Naive thymus-derived CD4-positive, alpha-beta T cell (primary cell): ENCODE measurements at regions of chr20 and their contacts with region 1.

Region 1: GRCh38 chr20:833450-834150 is at the start of gene FAM110A:
- DNase-seq: peak; percentile 87 to 95 (median 94)
- ATAC-seq: peak; percentile 94
- H3K4me3 ChIP-seq: peak within 1 kb of the TSS; percentile 88
- H3K4me3 Mint-ChIP-seq: peak within 1 kb of the TSS; percentile 73 to 92 (median 87)
- H3K27ac ChIP-seq: peak within 1 kb of the TSS; percentile 94
- H3K27ac Mint-ChIP-seq: peak within 1 kb of the TSS; percentile 60 to 97 (median 87)
- H3K4me1 ChIP-seq: peaks cover 24 to 27% of the 10 kb centered on the region in 2 donors
- H3K4me1 Mint-ChIP-seq: peaks cover 36 to 50% (median 46%) of the 10 kb centered on the region in 7 donors
- H3K27me3 ChIP-seq: no peaks in the 10 kb centered on the region
- H3K27me3 Mint-ChIP-seq: no peaks in the 10 kb centered on the region
- total RNA-seq, gene FAM110A: 10.9 to 47.4 (median 23.7) TPM

Region 2: DNA sequence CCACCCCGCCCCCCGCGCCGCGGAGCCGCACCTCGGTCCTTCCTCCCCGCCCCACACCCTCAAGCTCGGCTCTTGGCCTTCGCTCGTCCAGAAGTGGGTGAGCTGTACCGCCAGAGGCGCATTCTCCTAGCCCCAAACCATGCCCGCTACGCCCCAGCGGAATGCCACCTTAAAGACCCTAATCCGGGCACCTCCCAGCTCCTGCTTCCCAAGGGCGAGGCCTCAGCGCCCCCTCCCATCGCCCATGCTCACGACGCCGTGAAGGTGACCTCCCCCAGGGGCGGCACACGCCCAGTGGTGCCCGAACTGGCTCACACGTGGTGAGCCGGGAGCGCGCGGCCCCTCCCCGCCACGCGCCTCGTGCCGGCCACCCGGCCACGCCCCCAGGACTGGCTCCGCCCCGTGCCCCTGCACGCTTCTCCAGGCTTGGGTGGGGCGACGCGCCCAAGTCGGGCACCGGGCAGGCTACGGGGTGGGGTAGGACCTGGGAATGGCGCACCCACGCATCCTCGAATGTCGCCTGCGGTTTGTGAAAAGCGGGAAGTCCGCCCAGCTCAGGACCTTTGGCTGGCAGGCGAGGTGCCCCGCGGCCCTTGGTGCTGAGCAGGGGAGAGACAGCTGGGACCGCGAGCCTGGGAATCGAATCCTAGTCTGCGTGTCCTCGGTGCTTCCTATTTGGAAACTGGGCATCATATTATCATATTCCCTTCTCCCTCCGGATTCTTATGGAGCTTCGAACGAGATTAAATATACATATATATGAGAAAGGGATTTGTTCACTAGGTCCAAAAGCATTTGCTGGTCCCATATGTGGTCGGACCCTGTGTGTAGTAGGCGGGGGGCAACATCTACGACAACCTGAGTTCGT is 509.2 kb before region 1 on chr20:
- CTCF ChIA-PET with region 1: no interaction called
- POLR2A ChIA-PET with region 1: no interaction called
- intact Hi-C with region 1: loop called in 1 of 2 experiments (anchors 2 kb)
- DNase-seq: peak; percentile 74 to 96 (median 84)
- ATAC-seq: peak; percentile 75
- H3K4me3 ChIP-seq: peak overlapping the region; percentile 80
- H3K4me3 Mint-ChIP-seq: peak overlapping the region; percentile 88 to 97 (median 94)
- H3K27ac ChIP-seq: peak overlapping the region; percentile 77
- H3K27ac Mint-ChIP-seq: peak overlapping the region; percentile 84 to 96 (median 94)
- H3K4me1 ChIP-seq: peaks cover 7 to 9% of the 10 kb centered on the region in 2 donors
- H3K4me1 Mint-ChIP-seq: peaks cover 7 to 20% (median 17%) of the 10 kb centered on the region in 7 donors
- H3K27me3 ChIP-seq: no peaks in the 10 kb centered on the region
- H3K27me3 Mint-ChIP-seq: peaks cover 0 to 8% (median 0%) of the 10 kb centered on the region in 5 donors

Region 3: GRCh38 chr20:543369-544152 is 290.0 kb before region 1 on chr20 and contains the start of gene CSNK2A1:
- CTCF ChIA-PET with region 1: no interaction called
- POLR2A ChIA-PET with region 1: no interaction called
- intact Hi-C with region 1: loop called in 1 of 2 experiments (anchors 5 kb)
- DNase-seq: peak; percentile 93 to 99 (median 97)
- ATAC-seq: peak; percentile 97
- H3K4me3 ChIP-seq: peak within 1 kb of the TSS; percentile 59
- H3K4me3 Mint-ChIP-seq: peak within 1 kb of the TSS; percentile 86 to 100 (median 91)
- H3K27ac ChIP-seq: peak within 1 kb of the TSS; percentile 94
- H3K27ac Mint-ChIP-seq: peak within 1 kb of the TSS; percentile 97 to 100 (median 98)
- H3K4me1 ChIP-seq: peaks cover 17 to 39% of the 10 kb centered on the region in 2 donors
- H3K4me1 Mint-ChIP-seq: peaks cover 40 to 58% (median 54%) of the 10 kb centered on the region in 7 donors
- H3K27me3 ChIP-seq: no peaks in the 10 kb centered on the region
- H3K27me3 Mint-ChIP-seq: peaks cover 0 to 9% (median 5%) of the 10 kb centered on the region in 5 donors
- total RNA-seq, gene CSNK2A1: 69.7 to 117 (median 90.8) TPM

Region 4: DNA sequence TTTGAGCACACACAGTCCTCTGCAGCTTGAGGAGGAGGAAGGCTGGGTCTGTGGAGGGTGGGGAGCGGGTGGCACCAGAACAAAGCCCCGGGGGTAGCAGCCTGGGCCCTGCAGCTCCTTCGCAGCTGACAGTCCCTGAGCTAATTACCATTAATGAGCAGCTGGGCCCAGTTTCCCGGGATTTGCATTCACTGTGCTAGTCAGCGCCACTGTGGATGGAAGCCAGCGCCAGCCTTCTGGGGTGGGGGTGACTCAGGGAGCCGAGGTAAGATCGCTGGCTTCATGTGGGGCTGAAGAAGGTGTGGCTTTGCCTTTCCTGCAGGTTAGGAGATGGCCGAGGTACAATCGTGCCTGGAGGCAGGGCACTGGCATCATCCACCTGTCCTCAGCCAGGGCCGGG is 199.0 kb before region 1 on chr20:
- CTCF ChIA-PET with region 1: no interaction called
- POLR2A ChIA-PET with region 1: no interaction called
- intact Hi-C with region 1: no loop called
- DNase-seq: no peak
- ATAC-seq: no peak
- H3K4me3 ChIP-seq: no peak overlapping the region
- H3K4me3 Mint-ChIP-seq: no peak overlapping the region
- H3K27ac ChIP-seq: no peak overlapping the region
- H3K27ac Mint-ChIP-seq: no peak overlapping the region
- H3K4me1 ChIP-seq: no peaks in the 10 kb centered on the region
- H3K4me1 Mint-ChIP-seq: no peaks in the 10 kb centered on the region
- H3K27me3 ChIP-seq: no peaks in the 10 kb centered on the region
- H3K27me3 Mint-ChIP-seq: peaks cover 5 to 29% (median 16%) of the 10 kb centered on the region in 5 donors

Region 5: GRCh38 chr20:768426-768978 is 65.1 kb before region 1 on chr20 and contains the start of gene SLC52A3:
- CTCF ChIA-PET with region 1: no interaction called
- POLR2A ChIA-PET with region 1: no interaction called
- intact Hi-C with region 1: no loop called
- DNase-seq: no peak
- ATAC-seq: no peak
- H3K4me3 ChIP-seq: no peak within 1 kb of the TSS
- H3K4me3 Mint-ChIP-seq: no peak within 1 kb of the TSS
- H3K27ac ChIP-seq: no peak within 1 kb of the TSS
- H3K27ac Mint-ChIP-seq: no peak within 1 kb of the TSS
- H3K4me1 ChIP-seq: no peaks in the 10 kb centered on the region
- H3K4me1 Mint-ChIP-seq: peaks cover 0 to 3% (median 0%) of the 10 kb centered on the region in 7 donors
- H3K27me3 ChIP-seq: no peaks in the 10 kb centered on the region
- H3K27me3 Mint-ChIP-seq: peaks cover 3 to 22% (median 10%) of the 10 kb centered on the region in 5 donors
- total RNA-seq, gene SLC52A3: not detected

Region 6: GRCh38 chr20:844473-845225 is 11.0 kb after region 1 on chr20:
- CTCF ChIA-PET with region 1: interaction called, 6 read pairs
- POLR2A ChIA-PET with region 1: interaction called, 43 read pairs
- intact Hi-C with region 1: loop called (anchors 1 kb)
- DNase-seq: peak; percentile 55 to 95 (median 83)
- ATAC-seq: peak; percentile 98
- H3K4me3 ChIP-seq: peak overlapping the region; percentile 75
- H3K4me3 Mint-ChIP-seq: peak overlapping the region; percentile 88 to 97 (median 94)
- H3K27ac ChIP-seq: peak overlapping the region; percentile 70
- H3K27ac Mint-ChIP-seq: peak overlapping the region in 8 of 9 donors; percentile 70 to 93 (median 86)
- H3K4me1 ChIP-seq: peaks cover 40 to 45% of the 10 kb centered on the region in 2 donors
- H3K4me1 Mint-ChIP-seq: peaks cover 30 to 58% (median 52%) of the 10 kb centered on the region in 7 donors
- H3K27me3 ChIP-seq: no peaks in the 10 kb centered on the region
- H3K27me3 Mint-ChIP-seq: no peaks in the 10 kb centered on the region

Region 7: DNA sequence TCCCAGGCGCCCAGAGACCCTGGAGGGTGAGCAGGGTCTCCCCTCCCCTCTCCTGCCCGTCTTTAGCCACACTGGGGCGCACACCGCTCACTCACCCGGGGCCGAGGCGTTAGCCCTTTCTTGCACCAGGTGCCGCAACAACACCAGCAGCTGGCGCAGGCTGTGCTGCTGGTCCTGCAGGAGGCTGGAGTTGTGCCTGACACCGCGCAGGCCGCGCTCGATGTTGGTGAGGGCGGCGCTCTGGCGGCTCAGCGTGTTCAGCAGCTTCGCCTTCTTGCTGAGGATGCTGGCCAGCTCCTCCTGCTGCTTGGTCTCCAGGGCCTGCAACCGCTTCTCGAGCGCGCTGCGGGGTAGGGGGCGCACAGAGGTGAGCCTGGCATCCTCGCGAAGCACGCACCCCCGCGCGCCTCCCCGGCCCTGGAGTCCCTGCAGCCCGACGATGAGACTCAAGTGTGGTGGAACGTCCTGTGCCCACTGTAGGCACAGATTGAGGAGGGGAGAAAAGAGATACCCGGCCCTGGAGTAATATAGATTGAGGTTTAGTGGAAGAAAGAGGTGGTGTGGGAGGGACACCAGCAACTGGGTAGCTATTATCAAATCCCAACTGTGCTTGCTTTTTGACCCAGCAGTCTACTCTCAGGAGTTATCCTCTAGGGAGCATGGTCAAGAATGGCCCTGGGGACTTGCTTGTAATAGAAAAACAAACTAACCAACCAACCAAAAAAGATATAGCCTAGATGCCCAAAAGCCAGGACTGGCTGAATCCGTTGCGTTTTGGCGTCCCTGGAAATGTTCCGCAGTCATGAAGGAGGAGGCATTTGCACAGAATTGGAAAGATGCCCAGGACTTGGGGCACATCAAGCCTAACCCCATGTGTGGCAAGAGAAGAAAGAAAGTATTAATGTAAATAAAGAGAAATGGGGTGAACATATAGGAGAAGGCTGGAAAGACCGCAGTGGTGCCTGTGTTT is 51.7 kb after region 1 on chr20:
- CTCF ChIA-PET with region 1: interaction called, 4 read pairs
- POLR2A ChIA-PET with region 1: no interaction called
- intact Hi-C with region 1: loop called in 1 of 2 experiments (anchors 5 kb)
- DNase-seq: peak in 2 of 9 donors; percentile 7 to 8
- ATAC-seq: no peak
- H3K4me3 ChIP-seq: no peak overlapping the region
- H3K4me3 Mint-ChIP-seq: no peak overlapping the region
- H3K27ac ChIP-seq: no peak overlapping the region
- H3K27ac Mint-ChIP-seq: no peak overlapping the region
- H3K4me1 ChIP-seq: no peaks in the 10 kb centered on the region
- H3K4me1 Mint-ChIP-seq: peaks cover 0 to 15% (median 5%) of the 10 kb centered on the region in 7 donors
- H3K27me3 ChIP-seq: no peaks in the 10 kb centered on the region
- H3K27me3 Mint-ChIP-seq: peaks cover 10 to 28% (median 17%) of the 10 kb centered on the region in 5 donors

Region 8: DNA sequence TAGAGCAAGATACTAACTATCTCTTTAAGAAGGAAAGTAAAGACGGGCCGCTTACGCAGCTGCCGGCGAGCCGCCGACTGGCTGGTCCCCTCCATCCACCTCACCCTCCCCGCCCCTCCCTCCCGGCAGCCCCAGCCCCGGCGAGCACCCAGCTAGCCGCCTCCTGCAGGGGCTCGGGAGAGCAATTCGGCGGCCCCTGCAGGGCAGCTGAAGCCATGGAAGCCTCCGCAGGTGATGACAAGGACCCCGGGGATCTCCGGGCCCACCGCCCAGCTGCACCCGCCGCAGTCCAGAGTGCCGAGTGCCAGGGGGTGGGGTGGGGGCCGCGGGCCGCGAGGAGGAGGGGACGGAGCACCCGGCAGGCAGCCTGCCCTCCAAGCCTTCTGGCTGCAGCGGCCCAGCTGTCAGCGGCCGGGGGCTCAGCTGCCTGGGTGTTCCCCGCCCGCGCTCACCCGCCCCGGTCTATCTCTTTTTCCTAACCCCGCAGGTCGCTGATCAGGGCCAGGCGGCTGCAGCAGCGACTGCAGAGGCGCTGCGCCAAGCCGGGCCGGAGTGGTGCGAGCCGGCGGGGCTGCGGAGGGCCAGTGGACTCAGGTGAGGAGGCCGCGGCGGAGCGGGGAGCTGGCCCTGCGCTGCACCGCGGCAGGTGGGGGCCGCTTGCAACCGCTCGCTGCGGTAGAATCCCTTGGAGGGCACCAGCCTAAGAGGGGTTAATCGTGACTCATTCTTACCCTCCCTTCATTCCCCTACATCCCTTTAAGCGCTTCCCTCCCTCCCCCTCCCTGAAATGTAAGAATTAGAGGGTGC is 432.8 kb after region 1 on chr20 and contains the start of gene SNPH:
- CTCF ChIA-PET with region 1: no interaction called
- POLR2A ChIA-PET with region 1: no interaction called
- intact Hi-C with region 1: loop called in 1 of 2 experiments (anchors 1 kb)
- DNase-seq: peak; percentile 41 to 79 (median 67)
- ATAC-seq: peak; percentile 93
- H3K4me3 ChIP-seq: peak within 1 kb of the TSS; percentile 66
- H3K4me3 Mint-ChIP-seq: peak within 1 kb of the TSS; percentile 79 to 99 (median 93)
- H3K27ac ChIP-seq: peak within 1 kb of the TSS; percentile 88
- H3K27ac Mint-ChIP-seq: peak within 1 kb of the TSS; percentile 77 to 100 (median 98)
- H3K4me1 ChIP-seq: peaks cover 9 to 54% of the 10 kb centered on the region in 2 donors
- H3K4me1 Mint-ChIP-seq: peaks cover 22 to 87% (median 81%) of the 10 kb centered on the region in 7 donors
- H3K27me3 ChIP-seq: no peaks in the 10 kb centered on the region
- H3K27me3 Mint-ChIP-seq: peaks cover 0 to 5% (median 0%) of the 10 kb centered on the region in 5 donors
- total RNA-seq, gene SNPH: 7.3 to 43.4 (median 22.5) TPM

Region 9: DNA sequence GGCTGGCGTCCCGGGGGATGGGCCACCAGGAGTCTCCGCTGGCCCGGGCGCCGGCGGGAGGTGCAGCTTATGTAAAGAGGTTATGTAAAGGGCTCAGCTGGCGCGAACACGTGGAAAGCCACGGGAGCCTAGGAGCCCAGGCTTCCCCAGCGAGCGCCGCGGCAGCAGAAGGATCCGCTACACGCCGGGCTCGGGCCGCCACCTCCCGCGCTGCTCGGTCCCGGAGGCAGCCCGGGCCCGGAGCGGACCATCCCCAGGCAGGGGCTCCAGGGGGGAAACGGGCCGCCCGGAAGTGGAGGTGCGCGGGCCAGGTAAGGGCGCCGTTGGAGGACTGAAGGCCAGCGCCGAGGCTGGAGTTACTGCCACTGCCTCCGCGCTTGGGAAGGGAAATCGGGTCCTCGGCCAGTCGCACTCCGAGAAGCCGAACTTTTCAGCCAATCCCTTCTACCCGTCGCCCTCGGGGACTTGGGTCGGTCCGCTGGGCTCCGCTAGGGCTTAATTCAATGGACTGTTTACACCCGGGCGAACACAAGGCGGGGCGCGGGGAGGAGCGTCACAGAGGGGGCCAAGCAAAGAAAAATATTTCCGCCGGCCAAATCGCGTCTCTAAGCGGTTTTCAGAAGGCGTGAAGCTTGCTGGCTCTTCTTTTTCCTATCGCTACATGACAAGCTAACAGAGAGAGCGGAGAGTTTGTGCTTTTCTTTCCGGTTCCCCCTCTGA is 1268.4 kb after region 1 on chr20:
- CTCF ChIA-PET with region 1: no interaction called
- POLR2A ChIA-PET with region 1: no interaction called
- intact Hi-C with region 1: loop called (anchors 2 to 5 kb)
- DNase-seq: peak; percentile 82 to 94 (median 92)
- ATAC-seq: peak; percentile 88
- H3K4me3 ChIP-seq: peak overlapping the region; percentile 88
- H3K4me3 Mint-ChIP-seq: peak overlapping the region; percentile 90 to 97 (median 96)
- H3K27ac ChIP-seq: peak overlapping the region; percentile 96
- H3K27ac Mint-ChIP-seq: peak overlapping the region; percentile 99 to 100 (median 100)
- H3K4me1 ChIP-seq: peaks cover 29 to 38% of the 10 kb centered on the region in 2 donors
- H3K4me1 Mint-ChIP-seq: peaks cover 36 to 58% (median 44%) of the 10 kb centered on the region in 7 donors
- H3K27me3 ChIP-seq: no peaks in the 10 kb centered on the region
- H3K27me3 Mint-ChIP-seq: peaks cover 0 to 4% (median 0%) of the 10 kb centered on the region in 5 donors